Colonic mucosa (tissue), 4 donors: ENCODE measurements at regions of chr9 and their contacts with region 1.

Region 1: DNA sequence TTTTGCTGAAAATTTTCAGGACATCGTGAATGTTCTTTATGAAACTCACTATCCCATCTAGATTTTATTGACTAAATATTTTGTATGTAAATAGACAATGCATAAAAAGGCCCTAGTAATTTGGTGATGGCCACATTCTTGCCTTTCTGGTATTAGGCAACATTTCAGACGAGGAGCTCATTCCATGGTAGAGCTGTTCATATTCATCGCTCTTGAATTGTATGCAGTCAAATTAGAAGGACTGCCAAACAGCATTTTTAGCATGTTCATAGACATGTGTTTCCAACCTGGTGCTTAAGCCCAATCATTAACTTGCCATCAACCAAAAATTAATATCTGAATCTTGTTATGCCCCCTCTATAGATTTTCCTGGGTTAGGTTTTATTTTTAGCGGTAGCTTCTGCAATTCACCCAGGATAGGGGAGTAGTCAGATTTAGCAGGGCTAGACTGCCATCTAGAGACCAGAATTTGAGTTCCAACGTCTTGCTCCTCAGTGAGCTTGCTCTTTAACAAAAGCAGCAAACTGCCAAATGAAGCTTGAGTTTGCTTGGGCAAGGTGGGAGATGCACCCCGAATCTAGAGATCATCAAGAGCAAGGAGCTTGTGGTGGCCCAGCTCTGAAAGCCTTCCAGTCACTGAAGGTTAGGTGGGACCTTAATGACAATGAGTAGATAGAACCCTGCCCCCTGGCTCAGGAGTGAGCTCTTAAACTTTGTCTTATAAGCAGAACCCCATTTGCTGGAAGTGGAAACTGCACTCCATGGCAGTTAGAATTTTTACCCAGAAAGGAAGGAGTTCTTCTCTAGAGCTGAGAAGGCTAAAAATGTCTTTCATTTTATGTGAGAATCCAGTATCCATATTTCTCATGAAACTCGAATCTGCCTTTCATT is 456.2 kb downstream of the RASEF start:
- DNase-seq: peak; percentile 66
- H3K4me3 ChIP-seq: no peak overlapping the region
- H3K27ac ChIP-seq: no peak overlapping the region
- H3K4me1 ChIP-seq: no peaks in the 10 kb centered on the region
- H3K27me3 ChIP-seq: no peaks in the 10 kb centered on the region
- CTCF ChIP-seq: peak; percentile 43

Region 2: DNA sequence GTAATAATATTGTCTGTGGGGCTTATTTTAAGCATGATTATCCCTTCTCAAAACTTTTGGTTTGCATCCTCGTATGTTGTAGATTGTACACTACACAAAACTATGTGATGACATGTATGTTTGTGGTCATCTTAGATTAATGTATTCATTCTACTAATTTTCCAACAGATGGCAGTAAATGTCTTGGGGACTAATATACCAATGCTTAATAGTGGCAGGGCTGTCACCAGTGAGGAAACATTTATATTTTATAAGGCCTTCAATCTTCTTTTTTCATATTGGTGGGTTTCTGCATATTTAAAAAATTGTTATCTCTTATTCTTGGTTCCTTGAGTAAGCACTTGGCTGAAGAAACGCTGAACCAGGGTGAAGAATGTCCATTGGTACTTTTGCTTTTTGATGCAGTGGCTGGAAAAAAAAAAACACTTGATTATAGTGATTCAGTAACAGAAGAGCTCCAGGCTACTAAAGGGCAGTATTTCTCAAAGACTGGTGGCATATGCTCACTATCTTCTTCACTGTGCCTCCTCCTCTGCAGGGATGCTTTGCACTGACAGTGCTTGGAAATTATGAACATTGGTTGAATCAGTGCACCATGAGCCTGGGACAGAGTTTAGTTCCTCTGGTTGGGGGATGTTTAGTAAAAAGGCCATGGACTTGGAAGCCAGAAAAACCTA is 74.1 kb before region 1 on chr9:
- intact Hi-C with region 1: loop called (anchors 10 kb)
- DNase-seq: no peak
- H3K4me3 ChIP-seq: no peak overlapping the region
- H3K27ac ChIP-seq: no peak overlapping the region
- H3K4me1 ChIP-seq: no peaks in the 10 kb centered on the region
- H3K27me3 ChIP-seq: no peaks in the 10 kb centered on the region
- CTCF ChIP-seq: no peak

Region 3: DNA sequence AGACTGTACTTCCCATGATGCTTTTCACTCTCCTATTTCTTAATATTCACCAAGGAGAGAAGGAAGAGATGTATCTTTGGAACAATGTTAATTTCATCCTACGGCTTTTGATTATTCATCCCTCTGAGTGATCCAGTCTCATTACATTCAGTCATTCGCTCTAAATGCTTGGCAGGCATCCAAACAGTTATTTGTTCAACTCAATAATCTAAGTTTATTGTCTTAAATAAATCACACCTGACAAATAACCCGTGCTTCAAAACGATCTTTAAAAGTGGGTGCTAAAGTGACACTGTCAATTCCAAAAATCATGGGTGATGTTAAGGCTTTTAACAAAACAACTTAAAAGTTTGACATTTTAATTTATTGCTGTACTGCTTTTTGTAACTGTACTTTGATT is 223.1 kb after region 1 on chr9:
- intact Hi-C with region 1: no loop called
- DNase-seq: no peak
- H3K4me3 ChIP-seq: no peak overlapping the region
- H3K27ac ChIP-seq: no peak overlapping the region
- H3K4me1 ChIP-seq: no peaks in the 10 kb centered on the region
- H3K27me3 ChIP-seq: no peaks in the 10 kb centered on the region
- CTCF ChIP-seq: no peak

Region 4: DNA sequence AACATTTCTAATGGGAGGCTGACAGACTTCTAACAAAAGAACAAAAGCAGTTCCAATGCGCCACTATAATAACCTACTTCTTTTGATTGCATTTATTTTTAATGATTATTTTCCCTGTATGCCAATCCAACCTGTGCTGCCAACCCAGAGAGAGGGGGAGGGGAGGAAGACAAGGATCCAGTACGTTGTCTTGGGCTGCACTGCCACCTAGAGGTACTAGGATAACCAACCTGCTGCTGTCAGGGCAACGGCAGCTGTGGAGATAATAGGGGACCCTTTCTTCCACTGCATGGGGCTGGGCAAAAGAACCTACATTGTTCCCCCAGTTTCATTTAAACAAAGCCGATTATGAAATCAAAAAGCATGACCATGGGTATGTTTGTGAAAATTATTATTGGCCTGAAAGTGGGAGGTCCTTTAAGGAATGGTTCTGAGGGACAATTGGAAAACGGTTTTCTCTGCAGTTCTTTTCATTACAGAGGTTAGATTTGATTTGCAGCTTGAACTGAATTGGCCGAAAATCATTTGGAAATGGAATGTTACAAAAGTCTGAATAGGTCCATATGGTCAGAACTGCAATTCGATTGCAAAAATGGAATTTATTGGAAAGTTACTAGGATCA is 354.9 kb after region 1 on chr9:
- intact Hi-C with region 1: loop called (anchors 10 kb)
- DNase-seq: peak; percentile 90
- H3K4me3 ChIP-seq: no peak overlapping the region
- H3K27ac ChIP-seq: no peak overlapping the region
- H3K4me1 ChIP-seq: no peaks in the 10 kb centered on the region
- H3K27me3 ChIP-seq: no peaks in the 10 kb centered on the region
- CTCF ChIP-seq: peak; percentile 66